ENCODE measurements at regions of chr9 and their contacts with region 1.

Region 1: GRCh38 chr9:118091711-118092500 is 387.7 kb downstream of the TLR4 start:
- DNase-seq: no peak
- H3K4me3 ChIP-seq: no peak overlapping the region
- H3K27ac ChIP-seq: no peak overlapping the region
- H3K4me1 ChIP-seq: no peaks in the 10 kb centered on the region
- H3K27me3 ChIP-seq: no peaks in the 10 kb centered on the region
- CTCF ChIP-seq: no peak
- POLR2A ChIP-seq: no peak

Region 2: DNA sequence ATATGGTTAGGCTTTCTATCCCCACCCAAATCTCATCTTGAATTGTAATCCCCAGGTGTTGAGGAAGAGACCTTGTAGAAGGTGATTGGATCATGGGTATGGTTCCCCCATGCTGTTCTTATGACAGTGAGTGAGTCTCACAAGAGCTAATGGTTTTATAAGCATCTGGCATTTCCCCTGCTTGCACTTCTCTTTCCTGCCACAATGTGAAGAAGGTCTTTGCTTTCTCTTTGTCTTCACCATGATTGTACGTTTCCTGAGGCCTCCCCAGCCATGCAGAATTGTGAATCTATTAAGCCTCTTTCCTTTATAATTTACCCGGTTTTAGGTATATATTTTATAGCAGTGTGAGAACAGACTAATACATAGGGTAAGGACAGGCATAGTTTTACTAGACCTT is 53.2 kb before region 1 on chr9:
- intact Hi-C with region 1: loop called (anchors 10 kb)
- DNase-seq: no peak
- H3K4me3 ChIP-seq: no peak overlapping the region
- H3K27ac ChIP-seq: no peak overlapping the region
- H3K4me1 ChIP-seq: no peaks in the 10 kb centered on the region
- H3K27me3 ChIP-seq: no peaks in the 10 kb centered on the region
- CTCF ChIP-seq: no peak
- POLR2A ChIP-seq: no peak

Region 3: GRCh38 chr9:118360036-118360435 is 268.1 kb after region 1 on chr9:
- intact Hi-C with region 1: no loop called
- DNase-seq: no peak
- H3K4me3 ChIP-seq: no peak overlapping the region
- H3K27ac ChIP-seq: no peak overlapping the region
- H3K4me1 ChIP-seq: no peaks in the 10 kb centered on the region
- H3K27me3 ChIP-seq: no peaks in the 10 kb centered on the region
- CTCF ChIP-seq: no peak
- POLR2A ChIP-seq: no peak

Measured in prostate gland (tissue), 2 donors.